PC-9 (cell line): ENCODE measurements at regions of chr16 and their contacts with region 1.

Region 1: DNA sequence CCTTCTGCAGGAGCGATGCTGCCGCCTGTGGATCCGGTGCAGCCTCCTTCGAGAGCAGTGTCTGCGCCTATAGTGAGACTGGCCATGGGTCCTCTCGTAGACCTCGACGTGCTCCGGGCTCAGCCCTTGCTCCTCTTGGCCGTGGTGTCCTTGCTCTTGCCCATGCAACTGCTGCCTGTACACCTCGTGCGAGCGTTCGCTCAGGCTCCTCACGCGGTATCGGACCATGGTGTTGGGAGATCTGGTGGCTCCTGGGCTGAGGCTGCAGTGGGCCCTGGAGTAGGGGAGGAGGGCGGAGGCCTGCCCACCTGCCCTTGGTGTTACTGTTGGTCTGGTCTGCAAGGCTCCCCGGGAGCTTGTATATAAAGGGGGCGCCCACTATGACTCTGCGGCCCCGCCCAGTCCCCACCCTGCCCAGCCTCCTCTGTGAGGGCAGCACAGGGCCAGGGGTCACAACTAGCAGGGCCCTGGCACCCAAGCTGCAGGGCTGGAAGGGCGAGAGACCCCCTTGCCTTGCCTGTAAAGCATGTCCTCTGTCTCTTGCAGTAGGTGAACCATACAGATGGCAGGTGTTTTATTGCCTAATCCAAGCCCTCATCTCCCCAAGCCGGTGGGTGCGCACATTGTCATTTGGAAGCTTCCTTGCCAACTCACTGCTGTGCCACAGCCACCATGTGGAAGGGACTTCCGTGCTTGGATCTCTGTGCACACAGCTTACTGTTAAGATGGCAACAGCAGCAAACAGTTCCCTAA is at the start of gene PRM2:
- DNase-seq: no peak
- H3K4me3 ChIP-seq: no peak within 1 kb of the TSS
- H3K27ac ChIP-seq: no peak within 1 kb of the TSS
- H3K4me1 ChIP-seq: no peaks in the 10 kb centered on the region
- H3K27me3 ChIP-seq: no peaks in the 10 kb centered on the region
- CTCF ChIP-seq: no peak
- total RNA-seq, gene PRM2: not detected in 2 replicates

Region 2: DNA sequence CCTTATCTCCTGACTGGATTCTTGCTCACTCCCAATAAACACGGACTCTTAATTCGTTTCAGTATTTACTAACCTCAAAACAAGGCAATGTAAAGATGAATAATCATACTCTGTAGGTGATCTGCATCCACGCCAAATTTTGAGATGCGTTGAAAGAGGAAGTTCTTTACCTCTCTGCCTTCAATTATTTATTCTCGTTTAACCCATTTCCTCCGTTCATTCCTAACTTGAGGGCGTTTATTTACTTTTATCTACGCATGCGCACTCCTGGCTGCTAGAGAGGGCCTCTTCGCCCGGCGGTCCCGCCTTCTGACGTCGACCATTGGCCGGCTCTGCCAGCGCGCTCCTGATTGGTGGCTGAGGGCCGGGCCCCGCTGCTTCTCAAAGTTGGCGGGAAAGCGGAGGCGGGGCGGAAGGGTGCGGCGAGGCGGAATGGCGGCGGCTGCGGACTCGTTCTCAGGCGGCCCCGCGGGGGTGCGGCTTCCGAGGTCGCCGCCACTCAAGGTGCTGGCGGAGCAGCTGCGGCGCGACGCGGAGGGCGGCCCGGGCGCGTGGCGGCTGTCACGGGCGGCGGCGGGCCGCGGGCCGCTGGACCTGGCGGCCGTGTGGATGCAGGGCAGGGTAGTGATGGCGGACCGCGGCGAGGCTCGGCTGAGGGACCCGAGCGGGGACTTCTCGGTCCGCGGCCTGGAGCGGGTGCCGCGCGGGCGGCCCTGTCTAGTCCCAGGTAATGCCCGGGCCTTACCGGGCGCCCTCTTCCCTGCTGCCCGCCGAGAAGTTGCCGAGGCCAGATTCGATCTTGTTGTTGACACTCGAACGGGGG is 68.9 kb after region 1 on chr16 and contains the start of gene RMI2:
- CTCF ChIA-PET with region 1: no interaction called
- POLR2A ChIA-PET with region 1: interaction called, 19 read pairs
- intact Hi-C with region 1: no loop called
- DNase-seq: peak; percentile 91 to 98
- H3K4me3 ChIP-seq: peak within 1 kb of the TSS; percentile 57
- H3K27ac ChIP-seq: no peak within 1 kb of the TSS
- H3K4me1 ChIP-seq: peaks cover 34% of the 10 kb centered on the region
- H3K27me3 ChIP-seq: no peaks in the 10 kb centered on the region
- CTCF ChIP-seq: no peak
- total RNA-seq, gene RMI2: 29.0 and 38.0 TPM in 2 replicates